ENCODE measurements at regions of chr22 and their contacts with region 1.

Region 1: GRCh38 chr22:28711820-28712777 is 29.5 kb downstream of the CHEK2 start:
- DNase-seq: peak; percentile 88
- H3K4me3 Mint-ChIP-seq: peak overlapping the region; percentile 55
- H3K27ac Mint-ChIP-seq: peak overlapping the region; percentile 91
- H3K4me1 Mint-ChIP-seq: peaks cover 29% of the 10 kb centered on the region
- H3K27me3 Mint-ChIP-seq: no peaks in the 10 kb centered on the region
- CTCF ChIP-seq: no peak

Region 2: DNA sequence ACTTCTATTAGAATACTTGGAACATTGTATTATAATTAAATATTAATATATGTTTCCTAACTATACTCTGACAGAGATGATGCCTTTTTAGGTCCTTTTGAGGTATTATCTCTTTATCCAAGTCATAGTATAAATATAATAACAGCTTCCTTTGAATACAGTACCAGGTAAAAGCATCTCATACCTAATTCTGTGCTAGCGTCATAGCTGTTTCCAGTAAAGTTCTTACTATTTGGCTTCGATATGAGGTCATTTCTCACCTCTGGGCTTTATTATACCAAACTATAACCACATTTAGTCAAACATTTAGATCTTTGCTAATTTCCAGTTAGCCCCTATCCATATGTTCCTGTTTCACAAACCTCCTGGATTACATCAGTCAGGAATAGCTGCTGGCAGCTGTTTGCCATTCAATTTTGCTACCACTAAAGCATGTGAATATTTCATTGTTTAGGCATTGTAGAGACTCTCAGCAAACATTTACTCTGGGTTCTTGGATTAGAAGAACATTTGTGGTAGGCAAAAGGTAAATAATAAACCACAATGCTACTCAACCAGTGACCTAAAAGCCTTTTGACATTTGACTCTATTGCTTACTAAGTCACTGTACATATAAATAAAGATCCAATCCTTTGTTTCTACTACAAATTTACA is 287.5 kb before region 1 on chr22:
- CTCF ChIA-PET with region 1: no interaction called
- POLR2A ChIA-PET with region 1: no interaction called
- intact Hi-C with region 1: no loop called
- DNase-seq: no peak
- H3K4me3 Mint-ChIP-seq: no peak overlapping the region
- H3K27ac Mint-ChIP-seq: no peak overlapping the region
- H3K4me1 Mint-ChIP-seq: no peaks in the 10 kb centered on the region
- H3K27me3 Mint-ChIP-seq: peaks cover 75% of the 10 kb centered on the region
- CTCF ChIP-seq: no peak

Region 3: GRCh38 chr22:28741758-28742561 is 29.9 kb after region 1 on chr22 and contains the starts of genes CHEK2 and HSCB:
- CTCF ChIA-PET with region 1: no interaction called
- POLR2A ChIA-PET with region 1: interaction called, 4 read pairs
- intact Hi-C with region 1: loop called (anchors 2 kb)
- DNase-seq: peak; percentile 99
- H3K4me3 Mint-ChIP-seq: peak within 1 kb of the TSS; percentile 93
- H3K27ac Mint-ChIP-seq: peak within 1 kb of the TSS; percentile 92
- H3K4me1 Mint-ChIP-seq: peaks cover 15% of the 10 kb centered on the region
- H3K27me3 Mint-ChIP-seq: no peaks in the 10 kb centered on the region
- CTCF ChIP-seq: no peak
- total RNA-seq, gene CHEK2: 17.6 and 18.8 TPM in 2 replicates
- total RNA-seq, gene HSCB: 19.3 and 24.7 TPM in 2 replicates

Region 4: DNA sequence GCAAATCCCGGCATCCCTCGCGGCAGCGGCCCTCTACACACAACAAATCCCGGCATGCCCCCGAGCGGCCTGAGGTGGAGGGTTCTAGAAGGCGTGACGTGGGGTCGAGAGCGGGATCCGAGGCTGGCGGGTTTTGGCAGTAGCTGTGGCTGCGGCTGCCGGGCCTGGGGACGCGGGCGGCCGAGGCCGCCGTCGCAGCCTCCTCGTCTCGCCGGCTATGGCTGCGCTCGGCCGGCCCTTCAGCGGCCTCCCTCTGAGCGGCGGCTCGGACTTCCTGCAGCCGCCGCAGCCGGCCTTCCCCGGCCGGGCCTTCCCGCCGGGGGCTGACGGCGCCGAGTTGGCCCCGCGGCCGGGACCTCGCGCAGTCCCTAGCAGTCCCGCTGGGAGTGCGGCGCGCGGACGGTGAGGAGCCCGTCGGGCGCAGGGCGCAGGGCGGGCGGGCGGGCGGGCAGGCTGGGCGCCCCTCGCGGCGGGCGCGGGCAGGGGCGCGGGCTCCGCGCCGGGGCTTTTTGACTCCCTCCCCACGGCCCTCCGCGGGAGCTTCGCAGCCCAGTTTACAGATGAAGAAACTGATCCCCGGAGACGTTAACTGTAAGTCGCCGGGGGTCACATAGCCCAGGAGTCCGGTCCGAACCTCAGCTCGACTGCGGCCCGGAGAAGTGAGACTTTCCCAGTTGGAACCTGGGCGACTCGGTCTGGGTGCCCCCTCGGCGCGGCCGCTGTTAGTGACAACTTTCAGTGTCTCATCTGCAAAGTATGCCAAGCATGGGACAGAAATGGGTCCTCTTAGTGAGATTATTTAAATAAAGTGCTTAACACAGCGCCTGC is 60.7 kb after region 1 on chr22 and contains the start of gene CCDC117:
- CTCF ChIA-PET with region 1: interaction called, 3 read pairs
- POLR2A ChIA-PET with region 1: interaction called, 9 read pairs
- intact Hi-C with region 1: loop called (anchors 2 kb)
- DNase-seq: peak; percentile 93
- H3K4me3 Mint-ChIP-seq: peak within 1 kb of the TSS; percentile 88
- H3K27ac Mint-ChIP-seq: peak within 1 kb of the TSS; percentile 87
- H3K4me1 Mint-ChIP-seq: peaks cover 10% of the 10 kb centered on the region
- H3K27me3 Mint-ChIP-seq: no peaks in the 10 kb centered on the region
- CTCF ChIP-seq: no peak
- total RNA-seq, gene CCDC117: 12.1 and 14.6 TPM in 2 replicates